Activated naive CD4-positive, alpha-beta T cell treated with anti-CD3 and anti-CD28 coated beads for 36 hours (primary cell): ENCODE measurements at regions of chr1 and their contacts with region 1.

Region 1: DNA sequence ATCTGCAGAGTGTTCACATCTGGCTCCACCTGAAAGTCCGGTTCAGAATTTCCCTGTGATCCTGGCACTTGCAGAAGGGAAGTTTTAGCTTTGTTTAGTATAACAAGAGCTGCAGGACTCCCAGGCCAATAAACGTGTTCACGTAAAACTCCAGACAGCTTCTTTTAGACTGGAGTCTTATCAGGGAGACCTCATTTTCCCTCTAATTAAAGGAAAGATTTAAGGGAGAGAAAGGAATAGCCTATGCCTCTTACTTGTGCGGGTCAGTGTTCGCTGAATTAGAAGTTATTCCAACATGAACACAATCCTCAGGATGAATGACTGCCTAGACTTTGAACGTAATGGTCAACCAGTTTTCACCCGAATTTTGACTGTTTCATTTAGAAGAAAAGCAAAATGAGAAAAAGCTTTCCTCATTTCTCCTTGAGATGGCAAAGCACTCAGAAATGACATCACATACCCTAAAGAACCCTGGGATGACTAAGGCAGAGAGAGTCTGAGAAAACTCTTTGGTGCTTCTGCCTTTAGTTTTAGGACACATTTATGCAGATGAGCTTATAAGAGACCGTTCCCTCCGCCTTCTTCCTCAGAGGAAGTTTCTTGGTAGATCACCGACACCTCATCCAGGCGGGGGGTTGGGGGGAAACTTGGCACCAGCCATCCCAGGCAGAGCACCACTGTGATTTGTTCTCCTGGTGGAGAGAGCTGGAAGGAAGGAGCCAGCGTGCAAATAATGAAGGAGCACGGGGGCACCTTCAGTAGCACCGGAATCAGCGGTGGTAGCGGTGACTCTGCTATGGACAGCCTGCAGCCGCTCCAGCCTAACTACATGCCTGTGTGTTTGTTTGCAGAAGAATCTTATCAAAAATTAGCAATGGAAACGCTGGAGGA is 202.1 kb upstream of the SGIP1 start:
- DNase-seq: peak; percentile 76
- H3K4me3 Mint-ChIP-seq: peak overlapping the region; percentile 98
- H3K27ac Mint-ChIP-seq: peak overlapping the region; percentile 95
- H3K4me1 Mint-ChIP-seq: peaks cover 42% of the 10 kb centered on the region
- H3K27me3 Mint-ChIP-seq: no peaks in the 10 kb centered on the region

Region 2: DNA sequence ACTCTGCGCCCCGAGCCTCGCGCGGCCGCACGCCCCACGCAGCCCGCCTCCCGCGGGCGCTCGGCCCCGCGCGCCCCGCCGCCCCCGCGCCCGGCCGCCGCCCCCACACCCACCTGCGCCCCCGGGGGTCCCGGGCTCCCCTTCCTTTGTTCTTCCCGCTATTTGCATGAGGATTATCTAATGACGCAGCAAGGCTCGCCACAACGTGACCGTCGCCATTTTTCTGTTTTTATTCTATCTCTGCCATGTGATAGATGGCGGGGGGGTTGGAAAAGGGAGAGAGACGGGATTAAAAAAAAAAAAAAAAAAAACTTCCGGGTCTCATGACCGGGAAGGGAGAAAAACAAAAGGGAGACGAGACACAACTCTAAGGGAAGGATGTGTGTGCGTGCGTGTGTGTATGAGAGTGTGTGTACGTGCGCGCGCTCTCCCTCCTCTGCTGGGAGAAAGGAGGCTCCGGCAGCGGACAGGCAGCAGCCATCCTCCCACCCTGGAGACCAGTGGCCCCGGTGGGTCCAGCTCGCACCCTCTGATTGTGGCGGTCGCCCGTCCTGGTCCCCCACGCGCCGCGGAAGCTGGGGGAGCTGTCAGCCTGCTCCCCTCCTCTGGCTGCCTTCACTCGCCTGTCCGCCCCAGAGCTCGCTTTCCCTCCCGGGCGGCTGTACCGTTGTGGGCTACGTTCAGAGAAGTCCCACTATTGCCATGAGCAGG is 1264.3 kb before region 1 on chr1:
- CTCF ChIA-PET with region 1: no interaction called
- intact Hi-C with region 1: loop called (anchors 10 kb)
- DNase-seq: peak; percentile 71
- H3K4me3 Mint-ChIP-seq: peak overlapping the region; percentile 87
- H3K27ac Mint-ChIP-seq: peak overlapping the region; percentile 95
- H3K4me1 Mint-ChIP-seq: peaks cover 51% of the 10 kb centered on the region
- H3K27me3 Mint-ChIP-seq: no peaks in the 10 kb centered on the region

Region 3: DNA sequence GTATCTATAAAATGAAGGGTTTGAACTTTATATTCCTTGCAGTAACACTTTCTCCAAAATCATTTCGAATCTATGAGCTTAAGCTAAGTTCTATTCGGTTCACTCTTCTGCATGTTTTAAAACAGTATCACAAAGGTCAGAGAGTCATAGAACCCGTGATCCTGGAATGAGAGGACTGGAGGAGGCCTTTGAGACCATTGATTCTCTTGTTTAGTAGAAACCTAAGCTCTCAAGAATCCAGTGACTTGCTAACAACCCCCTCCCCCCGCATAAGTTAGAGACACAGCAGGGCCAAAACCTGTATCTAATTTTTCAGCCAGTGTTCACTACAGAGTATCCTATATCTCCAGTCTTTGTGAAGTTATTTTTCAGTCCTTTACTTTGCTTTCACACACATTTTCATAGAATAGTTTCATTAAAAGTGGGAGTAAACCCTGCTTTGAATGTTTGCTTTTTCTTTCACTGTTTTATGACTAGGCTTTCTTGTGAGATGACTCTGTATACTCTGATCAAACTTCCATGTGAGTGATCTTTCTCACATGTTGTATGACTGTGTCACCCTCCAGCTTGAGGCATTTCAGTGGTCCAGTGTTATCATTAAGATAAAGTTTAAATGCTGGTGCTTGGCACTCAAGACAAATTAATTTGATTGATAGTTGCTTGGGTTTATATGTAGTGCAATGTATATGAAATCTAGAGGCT is 73.3 kb before region 1 on chr1:
- CTCF ChIA-PET with region 1: interaction called, 4 read pairs
- intact Hi-C with region 1: loop called (anchors 1 kb)
- DNase-seq: peak; percentile 43
- H3K4me3 Mint-ChIP-seq: no peak overlapping the region
- H3K27ac Mint-ChIP-seq: peak overlapping the region; percentile 3
- H3K4me1 Mint-ChIP-seq: peaks cover 84% of the 10 kb centered on the region
- H3K27me3 Mint-ChIP-seq: no peaks in the 10 kb centered on the region

Region 4: DNA sequence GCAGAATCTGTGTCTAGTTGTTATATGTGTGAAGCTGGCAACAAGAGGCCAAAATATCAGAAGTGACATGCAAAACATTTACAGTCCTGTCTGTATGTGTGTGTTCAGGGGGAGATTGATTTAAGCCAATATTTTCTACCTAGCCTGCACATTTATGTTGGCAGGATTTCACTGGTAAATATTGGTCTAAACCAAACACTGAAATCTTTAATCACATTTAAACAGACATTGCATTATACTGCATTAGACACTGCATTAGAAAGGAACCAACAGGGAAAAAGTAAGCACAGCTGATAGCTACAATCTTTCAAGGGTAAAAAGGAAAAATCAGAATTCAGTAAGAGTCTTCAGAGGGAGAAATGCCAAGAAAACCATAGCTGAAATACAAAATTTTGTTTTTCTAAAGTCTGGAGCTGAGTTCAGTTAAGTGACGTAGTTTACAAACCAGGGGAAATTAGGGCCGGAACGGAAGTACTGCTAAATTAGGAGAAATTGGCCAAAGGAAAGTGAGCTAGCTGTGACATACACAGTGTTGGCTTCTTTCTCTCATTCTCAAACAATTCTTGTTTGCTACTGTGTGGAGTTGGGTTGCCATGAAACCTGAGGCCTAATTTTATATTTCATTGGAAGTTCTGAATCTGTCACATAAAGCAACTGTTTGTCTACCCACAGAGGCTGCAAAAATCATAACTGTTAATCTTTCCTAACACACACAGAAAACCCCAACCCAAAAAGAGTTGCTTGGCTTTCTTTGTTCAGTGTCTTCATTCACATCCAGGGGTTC is 15.2 kb before region 1 on chr1:
- CTCF ChIA-PET with region 1: no interaction called
- intact Hi-C with region 1: loop called (anchors 1 kb)
- DNase-seq: no peak
- H3K4me3 Mint-ChIP-seq: no peak overlapping the region
- H3K27ac Mint-ChIP-seq: peak overlapping the region; percentile 50
- H3K4me1 Mint-ChIP-seq: peaks cover 10% of the 10 kb centered on the region
- H3K27me3 Mint-ChIP-seq: no peaks in the 10 kb centered on the region

Region 5: DNA sequence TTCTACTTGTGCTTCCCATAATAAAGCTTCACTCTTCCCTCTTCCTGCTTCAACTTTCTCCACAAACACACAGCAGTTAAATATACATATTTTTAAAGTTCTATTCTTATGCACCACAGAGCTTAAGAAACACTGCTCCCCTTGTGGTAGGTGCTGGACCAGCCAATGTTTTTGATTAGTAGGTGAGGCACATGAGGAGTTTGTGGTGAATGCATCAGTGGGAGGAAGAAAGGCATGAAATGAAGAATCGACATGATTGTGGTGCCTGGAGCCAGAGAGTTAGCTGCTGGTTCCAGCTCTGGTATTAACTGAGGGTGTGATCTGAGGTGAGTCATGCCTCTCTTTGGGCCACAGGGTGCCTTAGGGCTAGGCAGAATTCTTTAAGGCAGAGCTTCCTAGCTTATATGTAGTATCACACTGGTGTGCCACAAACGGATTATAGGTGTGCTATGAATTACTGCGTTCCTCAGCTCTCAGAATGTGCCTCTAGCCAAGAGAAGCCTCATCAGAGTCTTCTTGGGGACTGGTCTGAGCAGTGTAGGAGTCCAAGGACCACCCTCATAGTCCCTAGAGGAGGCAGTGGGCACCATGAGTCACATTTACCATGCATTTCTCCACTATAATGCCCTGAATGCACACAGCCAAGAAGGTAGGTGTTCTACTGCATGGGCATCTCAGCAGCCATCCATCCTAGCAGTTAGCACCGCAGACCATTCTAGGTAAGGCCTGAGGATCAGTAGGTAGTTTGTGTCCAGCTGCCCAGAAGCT is 104.7 kb after region 1 on chr1:
- CTCF ChIA-PET with region 1: interaction called, 12 read pairs
- intact Hi-C with region 1: loop called (anchors 1 kb)
- DNase-seq: peak; percentile 81
- H3K4me3 Mint-ChIP-seq: no peak overlapping the region
- H3K27ac Mint-ChIP-seq: no peak overlapping the region
- H3K4me1 Mint-ChIP-seq: peaks cover 40% of the 10 kb centered on the region
- H3K27me3 Mint-ChIP-seq: peaks cover 2% of the 10 kb centered on the region

Region 6: DNA sequence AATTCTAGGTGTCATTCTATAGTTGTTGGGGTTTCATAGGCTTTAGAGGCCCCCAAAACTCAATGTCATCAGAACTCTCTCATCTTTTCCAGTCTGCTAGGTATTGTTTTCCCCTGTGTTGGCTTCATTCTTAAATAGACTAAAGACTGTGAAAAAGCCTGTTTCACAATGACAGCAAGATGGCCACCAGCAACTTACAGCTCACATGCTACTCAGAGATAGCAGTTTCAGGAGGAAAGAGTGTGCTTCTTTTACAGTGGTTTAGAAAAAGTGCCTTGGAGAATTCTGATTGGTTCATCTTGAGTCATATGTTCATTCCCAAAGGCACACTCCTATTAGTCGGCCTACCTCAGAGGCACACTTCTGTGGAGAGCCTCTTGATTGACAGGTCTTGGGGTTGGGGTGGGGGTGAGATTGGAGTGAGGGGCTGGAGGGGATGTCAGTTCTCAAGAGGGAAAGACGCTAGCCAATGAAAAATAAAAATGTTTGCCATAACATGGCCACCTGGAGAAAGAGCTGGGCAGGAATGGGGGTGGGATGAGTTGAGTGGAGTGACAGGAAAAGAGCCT is 842.9 kb after region 1 on chr1:
- CTCF ChIA-PET with region 1: no interaction called
- intact Hi-C with region 1: loop called (anchors 5 kb)
- DNase-seq: peak; percentile 63
- H3K4me3 Mint-ChIP-seq: peak overlapping the region; percentile 7
- H3K27ac Mint-ChIP-seq: peak overlapping the region; percentile 99
- H3K4me1 Mint-ChIP-seq: peaks cover 81% of the 10 kb centered on the region
- H3K27me3 Mint-ChIP-seq: no peaks in the 10 kb centered on the region

Region 7: DNA sequence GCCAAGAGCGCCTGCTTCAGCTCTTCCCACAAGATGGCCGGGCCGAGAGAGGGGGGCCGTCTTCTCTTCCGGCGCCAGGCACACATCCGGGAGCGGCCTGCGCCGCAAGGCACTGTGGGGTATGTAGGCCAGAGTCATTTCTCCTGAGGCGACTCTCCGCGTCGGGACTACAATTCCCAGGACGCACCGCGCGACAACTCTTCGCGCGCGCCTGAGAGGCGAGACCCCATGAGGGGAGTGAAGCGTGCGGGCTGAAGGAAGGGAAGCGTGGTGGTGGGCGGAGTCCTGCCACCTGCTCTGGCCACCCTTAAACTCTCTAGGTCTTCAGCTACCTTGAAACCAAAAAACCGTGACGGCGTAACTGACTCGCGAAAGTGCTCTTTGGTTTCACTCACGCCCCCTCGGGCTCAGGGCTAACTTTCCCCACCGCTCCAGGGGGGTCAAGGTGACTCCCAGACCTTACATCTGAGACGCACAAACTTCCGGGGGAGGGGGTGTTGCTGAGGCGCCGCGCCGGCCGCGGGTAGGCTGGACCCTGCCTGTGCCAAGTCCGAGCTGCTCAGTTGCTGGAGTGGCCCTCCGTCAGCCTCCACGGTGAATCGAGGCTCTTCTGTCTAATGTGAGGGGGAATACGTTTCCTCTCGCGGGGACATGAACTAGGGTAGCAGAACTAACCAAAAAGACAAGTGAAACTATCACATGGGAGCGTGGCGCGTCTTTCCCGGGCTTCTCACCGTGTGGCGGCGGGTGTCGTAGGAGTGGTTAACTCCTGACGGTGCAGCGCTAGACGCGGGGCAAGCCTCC is 1098.7 kb after region 1 on chr1 and contains the start of gene SERBP1:
- CTCF ChIA-PET with region 1: no interaction called
- intact Hi-C with region 1: loop called (anchors 5 kb)
- DNase-seq: peak; percentile 97
- H3K4me3 Mint-ChIP-seq: peak within 1 kb of the TSS; percentile 97
- H3K27ac Mint-ChIP-seq: peak within 1 kb of the TSS; percentile 98
- H3K4me1 Mint-ChIP-seq: peaks cover 44% of the 10 kb centered on the region
- H3K27me3 Mint-ChIP-seq: no peaks in the 10 kb centered on the region
- total RNA-seq, gene SERBP1: 527 to 537 TPM